Posterior cingulate gyrus (tissue), 11 donors: ENCODE measurements at regions of chr1 and their contacts with region 1.

Region 1: DNA sequence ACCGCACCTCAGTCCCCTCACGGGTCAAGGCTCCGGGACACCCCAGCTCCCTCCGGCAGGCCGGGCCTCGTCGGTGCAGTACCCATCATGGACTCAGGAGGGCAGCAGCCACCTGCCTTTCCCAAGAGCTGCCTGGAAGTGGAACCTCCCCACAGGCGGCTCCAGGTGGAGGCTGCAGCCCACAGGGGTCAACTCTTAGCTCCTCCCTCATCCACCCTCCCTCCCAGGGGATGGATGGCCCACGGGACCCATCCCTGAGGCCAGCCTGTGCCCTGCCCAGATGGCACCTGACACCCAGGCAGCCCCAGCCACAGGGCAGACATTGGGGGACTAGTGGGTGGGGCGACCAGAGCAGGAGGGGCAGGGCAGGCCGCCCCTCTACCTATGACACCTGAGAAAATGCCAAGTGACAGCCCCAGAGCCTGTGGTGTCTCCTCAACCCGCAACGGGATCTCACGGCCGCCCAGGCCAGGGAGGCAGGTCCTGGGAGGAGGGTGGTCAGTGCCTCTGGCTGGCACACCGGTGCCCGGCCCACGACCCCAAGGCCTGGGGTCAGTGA is 1.2 kb upstream of the ARHGEF16 start:
- DNase-seq: peak; percentile 56 to 96 (median 78)

Region 2: DNA sequence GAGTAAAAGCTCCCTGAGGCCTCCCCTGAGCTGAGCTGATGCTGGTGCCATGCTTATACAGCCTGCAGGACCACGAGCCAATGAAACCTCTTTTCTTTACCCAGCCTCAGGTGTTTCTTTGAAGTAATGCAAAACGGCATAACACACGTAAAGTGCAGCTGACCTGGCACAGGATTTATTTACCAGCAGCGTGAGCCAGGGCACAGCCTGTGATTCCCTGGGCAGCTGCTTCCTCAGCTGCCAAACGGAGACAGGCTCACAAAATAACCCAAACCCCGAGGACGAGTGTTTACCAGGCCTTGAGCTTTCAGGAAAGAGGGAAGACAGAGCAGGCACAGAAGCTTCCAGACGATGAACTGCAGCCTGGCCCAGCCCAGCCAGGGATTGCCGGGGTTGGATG is 119.4 kb before region 1 on chr1:
- intact Hi-C with region 1: no loop called
- DNase-seq: peak in 1 of 10 donors; percentile 42

Region 3: GRCh38 chr1:3483801-3484444 is 30.6 kb after region 1 on chr1:
- intact Hi-C with region 1: loop called (anchors 1 kb)
- DNase-seq: peak in 4 of 10 donors; percentile 32 to 50 (median 41)

Region 4: GRCh38 chr1:3618881-3619671 is 165.8 kb after region 1 on chr1:
- intact Hi-C with region 1: loop called (anchors 5 kb)
- DNase-seq: peak in 7 of 10 donors; percentile 52 to 94 (median 70)

Region 5: GRCh38 chr1:3799976-3800685 is 346.8 kb after region 1 on chr1:
- intact Hi-C with region 1: loop called (anchors 5 kb)
- DNase-seq: peak in 3 of 10 donors; percentile 13 to 57 (median 42)